ENCODE measurements at regions of chr5 and their contacts with region 1.

Region 1: DNA sequence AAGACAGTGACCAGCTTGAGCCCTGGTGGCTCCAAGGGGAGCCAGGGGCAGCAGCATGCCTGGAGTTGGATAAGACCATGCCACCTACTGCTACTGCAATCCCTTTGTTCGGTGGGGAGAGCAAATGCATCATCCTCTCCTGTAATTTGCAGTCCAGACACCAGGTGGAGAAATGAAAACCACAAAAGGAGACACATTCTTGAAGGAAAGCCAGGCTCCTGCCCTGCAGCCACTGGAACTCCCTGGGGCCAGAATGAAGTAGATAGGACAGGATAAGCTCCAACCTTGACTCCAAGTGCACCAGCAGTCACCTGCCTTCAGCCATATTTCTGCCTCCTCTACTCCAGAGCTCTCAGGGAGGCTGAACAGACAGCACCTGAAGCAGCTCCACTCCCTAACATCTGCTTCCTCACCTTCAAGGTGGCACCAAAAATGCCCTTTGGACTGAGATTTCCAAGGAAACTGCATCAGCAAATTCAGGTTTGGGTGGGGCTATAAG is 65.1 kb upstream of the IQGAP2 start:
- DNase-seq: peak in 1 of 3 donors; percentile 61
- ATAC-seq: peak; percentile 94 to 97 (median 96)
- H3K4me3 ChIP-seq: no peak overlapping the region
- H3K27ac ChIP-seq: no peak overlapping the region
- H3K4me1 ChIP-seq: no peaks in the 10 kb centered on the region
- H3K27me3 ChIP-seq: no peaks in the 10 kb centered on the region
- CTCF ChIP-seq: peak; percentile 59 to 68 (median 66)
- POLR2A ChIP-seq: no peak

Region 2: GRCh38 chr5:76641514-76642120 is 303.6 kb after region 1 on chr5:
- intact Hi-C with region 1: loop called in 1 of 2 experiments (anchors 5 kb)
- DNase-seq: peak in 1 of 3 donors; percentile 62
- ATAC-seq: peak; percentile 66 to 74 (median 69)
- H3K4me3 ChIP-seq: no peak overlapping the region
- H3K27ac ChIP-seq: no peak overlapping the region
- H3K4me1 ChIP-seq: peaks cover 0 to 18% (median 6%) of the 10 kb centered on the region in 4 donors
- H3K27me3 ChIP-seq: no peaks in the 10 kb centered on the region
- CTCF ChIP-seq: peak; percentile 66 to 82 (median 76)
- POLR2A ChIP-seq: no peak